ENCODE measurements at regions of chr3 and their contacts with region 1.

Region 1: DNA sequence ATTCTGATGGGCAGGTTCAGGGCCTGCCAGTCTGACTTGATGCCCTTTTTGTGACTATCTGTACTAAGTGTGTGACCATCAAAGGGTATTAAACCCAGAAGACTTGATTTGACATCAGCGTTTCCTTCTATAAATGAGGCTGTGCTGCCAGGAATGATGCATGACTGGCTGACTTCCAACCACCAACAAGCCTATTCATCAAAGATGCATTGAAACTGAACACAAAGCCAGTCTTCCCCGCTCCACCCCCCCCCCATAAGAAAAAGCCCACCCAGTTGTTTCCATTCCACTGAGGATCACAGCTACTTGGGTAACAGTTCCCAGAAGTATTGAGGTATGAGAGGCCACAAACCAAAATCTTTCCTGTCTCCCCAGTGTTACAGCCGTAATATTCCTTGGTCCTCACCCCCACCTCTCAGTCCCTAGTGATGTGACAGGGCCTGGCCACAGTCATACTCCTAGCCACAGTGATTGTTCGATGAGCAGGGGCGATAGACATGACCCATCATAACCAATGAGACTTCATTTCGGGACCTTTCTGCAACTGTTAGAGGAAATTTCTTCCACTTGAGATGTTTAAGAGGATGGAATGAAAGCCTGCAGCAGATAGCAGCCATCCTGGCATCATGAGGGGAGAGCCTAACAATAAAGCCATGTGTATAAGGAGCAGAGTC is 22.6 kb downstream of the SH3BP5 start:
- DNase-seq: peak; percentile 82
- H3K4me3 Mint-ChIP-seq: peak overlapping the region; percentile 61
- H3K27ac Mint-ChIP-seq: peak overlapping the region; percentile 98
- H3K4me1 Mint-ChIP-seq: peaks cover 78% of the 10 kb centered on the region
- H3K27me3 Mint-ChIP-seq: no peaks in the 10 kb centered on the region

Region 2: GRCh38 chr3:15051531-15051930 is 258.3 kb before region 1 on chr3:
- CTCF ChIA-PET with region 1: no interaction called
- POLR2A ChIA-PET with region 1: no interaction called
- intact Hi-C with region 1: no loop called
- DNase-seq: peak; percentile 62
- H3K4me3 Mint-ChIP-seq: no peak overlapping the region
- H3K27ac Mint-ChIP-seq: no peak overlapping the region
- H3K4me1 Mint-ChIP-seq: peaks cover 31% of the 10 kb centered on the region
- H3K27me3 Mint-ChIP-seq: no peaks in the 10 kb centered on the region

Region 3: DNA sequence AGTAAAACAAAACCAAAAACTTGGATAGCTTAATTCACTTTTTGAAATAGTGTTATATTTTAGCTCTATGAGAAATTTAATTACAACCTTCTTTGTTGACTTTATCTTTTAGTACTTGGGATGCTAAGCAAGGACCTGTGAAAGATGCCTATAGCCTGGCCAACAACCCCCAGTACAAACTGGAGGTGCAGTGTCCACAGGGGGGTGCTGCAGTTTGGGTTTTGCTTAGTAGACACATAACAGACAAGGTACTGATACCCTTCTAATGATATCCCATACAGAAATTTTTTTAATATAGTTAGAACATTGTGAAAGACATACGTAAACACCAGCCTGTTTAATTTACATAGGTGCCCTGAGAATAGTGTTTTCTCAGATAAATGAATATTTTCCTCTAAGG is 68.5 kb before region 1 on chr3:
- CTCF ChIA-PET with region 1: no interaction called
- POLR2A ChIA-PET with region 1: no interaction called
- intact Hi-C with region 1: no loop called
- DNase-seq: peak; percentile 69
- H3K4me3 Mint-ChIP-seq: no peak overlapping the region
- H3K27ac Mint-ChIP-seq: no peak overlapping the region
- H3K4me1 Mint-ChIP-seq: peaks cover 7% of the 10 kb centered on the region
- H3K27me3 Mint-ChIP-seq: no peaks in the 10 kb centered on the region

Region 4: DNA sequence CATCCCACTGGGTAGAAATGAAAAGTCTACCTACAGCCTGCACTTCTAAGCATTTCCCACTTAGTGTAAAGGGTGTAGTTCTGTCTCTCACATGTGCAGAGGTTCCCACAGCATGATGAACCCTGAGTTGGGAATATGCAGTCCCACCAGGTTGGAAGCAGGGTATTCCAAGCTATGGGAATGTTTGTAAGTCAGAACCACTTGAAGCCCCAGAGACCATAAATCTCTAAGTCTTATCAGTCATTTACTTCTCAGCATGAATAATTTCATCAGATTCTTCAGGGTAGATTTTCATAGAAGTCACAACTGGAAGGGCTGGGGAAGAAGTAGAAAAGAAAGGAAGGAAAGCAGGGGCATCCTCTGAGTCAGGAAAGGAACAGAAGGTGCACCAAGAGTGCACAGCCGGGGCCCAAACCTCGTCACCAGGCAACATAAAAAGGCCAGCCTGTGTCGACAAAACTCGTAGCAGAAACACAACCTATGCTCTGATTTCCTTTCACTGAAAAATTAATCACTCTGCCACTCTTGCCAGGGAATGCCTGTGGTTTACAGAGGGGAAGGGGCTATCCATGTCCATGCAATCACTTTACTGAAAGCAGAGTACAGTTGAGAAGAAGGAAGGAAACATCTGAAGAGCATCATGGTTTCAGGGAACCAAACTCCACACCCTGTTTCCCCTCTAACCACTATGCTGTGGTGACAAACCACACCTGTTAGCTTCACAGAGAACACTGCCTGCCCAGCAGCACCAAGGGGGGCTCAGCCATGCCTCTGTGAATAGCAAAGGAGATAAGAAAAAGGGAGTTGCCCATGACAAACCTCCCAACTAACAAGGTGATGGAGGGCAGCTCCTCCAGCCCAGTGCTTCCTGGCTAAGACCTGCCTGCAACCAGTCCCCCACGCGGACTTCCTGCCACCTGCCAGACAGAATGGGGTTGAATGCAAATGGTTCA is 17.9 kb before region 1 on chr3:
- CTCF ChIA-PET with region 1: interaction called, 3 read pairs
- POLR2A ChIA-PET with region 1: interaction called, 15 read pairs
- intact Hi-C with region 1: loop called (anchors 1 kb)
- DNase-seq: peak; percentile 83
- H3K4me3 Mint-ChIP-seq: peak overlapping the region; percentile 42
- H3K27ac Mint-ChIP-seq: peak overlapping the region; percentile 87
- H3K4me1 Mint-ChIP-seq: peaks cover 77% of the 10 kb centered on the region
- H3K27me3 Mint-ChIP-seq: no peaks in the 10 kb centered on the region

Region 5: GRCh38 chr3:15325242-15325641 is 15.4 kb after region 1 on chr3:
- CTCF ChIA-PET with region 1: interaction called, 6 read pairs
- POLR2A ChIA-PET with region 1: interaction called, 12 read pairs
- intact Hi-C with region 1: loop called (anchors 1 kb)
- DNase-seq: no peak
- H3K4me3 Mint-ChIP-seq: no peak overlapping the region
- H3K27ac Mint-ChIP-seq: peak overlapping the region; percentile 71
- H3K4me1 Mint-ChIP-seq: peaks cover 79% of the 10 kb centered on the region
- H3K27me3 Mint-ChIP-seq: no peaks in the 10 kb centered on the region

Region 6: GRCh38 chr3:15601397-15602145 is 291.8 kb after region 1 on chr3 and contains the starts of genes BTD and HACL1:
- CTCF ChIA-PET with region 1: no interaction called
- POLR2A ChIA-PET with region 1: no interaction called
- intact Hi-C with region 1: no loop called
- DNase-seq: peak; percentile 98
- H3K4me3 Mint-ChIP-seq: peak within 1 kb of the TSS; percentile 99
- H3K27ac Mint-ChIP-seq: peak within 1 kb of the TSS; percentile 94
- H3K4me1 Mint-ChIP-seq: peaks cover 43% of the 10 kb centered on the region
- H3K27me3 Mint-ChIP-seq: no peaks in the 10 kb centered on the region
- total RNA-seq, gene BTD: 8.6 to 8.7 TPM
- total RNA-seq, gene HACL1: 29.9 to 30.0 TPM